ENCODE measurements at regions of chr14 and their contacts with region 1.

Region 1: GRCh38 chr14:61456720-61457119 is 135.3 kb downstream of the PRKCH start:
- DNase-seq: peak; percentile 83

Region 2: GRCh38 chr14:61730756-61731373 is 274.1 kb after region 1 on chr14:
- in situ Hi-C with region 1: loop called (anchors 25 kb)
- DNase-seq: peak; percentile 35